ENCODE measurements at regions of chr2 and their contacts with region 1.

Region 1: DNA sequence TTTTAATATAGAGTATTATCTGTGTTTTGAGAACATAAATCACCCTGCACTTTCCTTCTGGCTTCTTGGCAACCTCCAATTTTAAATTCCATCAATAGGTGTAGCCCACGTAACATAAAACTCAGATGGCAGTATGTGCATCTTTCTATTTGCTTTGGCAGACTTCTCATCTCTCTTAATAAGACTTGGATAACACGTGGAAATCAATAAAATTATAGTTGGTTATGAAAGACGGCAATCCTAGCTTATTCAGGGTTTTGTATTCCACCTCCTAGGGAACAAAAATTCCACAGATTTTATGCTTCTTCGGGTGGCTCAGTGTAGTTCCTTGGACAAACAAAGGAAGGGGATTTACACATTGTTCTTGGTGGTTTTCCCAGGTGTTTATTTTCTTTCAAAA is 299.3 kb downstream of the RND3 start:
- DNase-seq: no peak
- H3K4me3 Mint-ChIP-seq: no peak overlapping the region
- H3K27ac Mint-ChIP-seq: peak overlapping the region; percentile 72
- H3K4me1 Mint-ChIP-seq: peaks cover 13% of the 10 kb centered on the region
- H3K27me3 Mint-ChIP-seq: no peaks in the 10 kb centered on the region
- CTCF ChIP-seq: no peak

Region 2: DNA sequence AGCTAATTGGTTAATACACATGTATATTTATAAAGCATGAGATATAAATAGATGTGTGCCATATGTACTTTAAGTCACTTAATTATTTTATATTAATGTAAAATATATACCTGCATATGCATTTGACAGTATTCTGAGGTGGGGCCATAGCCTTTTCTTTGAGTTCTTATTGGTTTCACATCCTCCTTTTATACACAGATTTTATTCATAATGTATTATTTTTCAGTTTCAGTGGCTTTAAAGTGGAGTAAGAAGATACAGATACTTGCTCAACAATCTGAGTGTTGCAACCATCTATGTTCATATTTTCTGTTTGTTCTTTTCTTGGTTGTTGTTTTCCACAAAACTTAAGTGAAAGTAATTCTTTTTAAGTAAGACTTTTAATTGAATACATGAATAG is 137.2 kb before region 1 on chr2:
- CTCF ChIA-PET with region 1: no interaction called
- intact Hi-C with region 1: no loop called
- DNase-seq: no peak
- H3K4me3 Mint-ChIP-seq: no peak overlapping the region
- H3K27ac Mint-ChIP-seq: no peak overlapping the region
- H3K4me1 Mint-ChIP-seq: peaks cover 5% of the 10 kb centered on the region
- H3K27me3 Mint-ChIP-seq: no peaks in the 10 kb centered on the region
- CTCF ChIP-seq: no peak

Region 3: DNA sequence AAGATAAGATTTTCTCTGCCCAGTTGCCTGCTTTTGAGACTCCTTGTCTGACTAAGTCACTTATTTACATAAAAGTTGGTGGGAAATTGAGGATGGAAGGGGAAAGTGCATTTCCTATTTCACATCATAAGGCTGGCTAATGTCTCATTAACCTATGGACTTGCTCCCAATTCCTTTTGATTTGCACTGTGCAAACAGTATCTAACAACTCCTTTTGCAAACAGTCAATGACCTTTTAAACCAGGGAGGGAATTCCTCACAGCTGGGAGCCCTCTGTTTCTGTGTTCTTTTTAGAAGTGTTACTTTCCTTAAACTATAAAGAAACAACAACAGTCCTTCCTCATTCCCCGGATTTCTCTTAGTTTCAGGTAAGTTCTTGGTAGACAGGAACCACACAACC is 26.4 kb after region 1 on chr2:
- CTCF ChIA-PET with region 1: no interaction called
- intact Hi-C with region 1: no loop called
- DNase-seq: peak; percentile 33
- H3K4me3 Mint-ChIP-seq: no peak overlapping the region
- H3K27ac Mint-ChIP-seq: peak overlapping the region; percentile 14
- H3K4me1 Mint-ChIP-seq: peaks cover 19% of the 10 kb centered on the region
- H3K27me3 Mint-ChIP-seq: no peaks in the 10 kb centered on the region
- CTCF ChIP-seq: no peak

Region 4: DNA sequence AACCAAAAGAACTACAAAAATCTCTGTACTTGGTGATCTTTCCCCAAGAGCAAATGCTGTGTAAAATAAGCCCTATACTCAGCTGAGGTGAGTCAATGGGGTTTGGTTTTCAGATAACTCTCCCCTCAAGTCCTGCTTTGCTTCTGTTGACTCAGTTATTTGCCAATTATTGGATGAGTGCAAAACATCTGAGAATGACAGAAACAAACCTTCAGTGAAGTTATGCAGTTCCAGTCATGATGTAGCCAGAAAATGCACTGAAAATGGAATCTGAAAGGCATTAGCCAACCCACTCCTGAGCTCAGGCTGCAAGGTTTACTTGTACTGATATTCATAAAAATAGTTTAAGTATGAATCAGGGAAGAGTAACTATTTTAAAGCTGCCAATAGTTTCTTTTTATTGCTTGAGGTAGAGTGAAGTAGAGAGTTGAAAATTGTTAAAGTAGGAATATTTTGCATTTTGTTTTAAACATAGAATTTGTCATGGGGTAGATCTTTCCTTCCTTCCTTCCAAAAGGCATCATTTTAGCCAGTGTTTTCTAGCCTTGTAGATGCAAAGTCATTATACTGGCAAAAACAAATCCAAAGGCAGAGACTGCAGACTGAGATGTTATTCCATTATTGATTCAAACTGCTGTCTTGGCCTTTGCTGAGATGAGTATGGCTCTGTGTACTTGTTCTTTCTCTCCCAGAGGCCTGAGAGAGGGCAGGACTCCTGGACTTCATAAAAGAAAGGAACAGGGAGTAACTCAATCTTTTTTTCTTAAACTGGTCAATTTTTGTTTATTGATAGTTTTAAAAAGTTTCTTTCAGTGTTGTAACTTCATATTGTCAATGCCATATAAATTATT is 84.0 kb after region 1 on chr2:
- CTCF ChIA-PET with region 1: no interaction called
- intact Hi-C with region 1: no loop called
- DNase-seq: no peak
- H3K4me3 Mint-ChIP-seq: no peak overlapping the region
- H3K27ac Mint-ChIP-seq: no peak overlapping the region
- H3K4me1 Mint-ChIP-seq: no peaks in the 10 kb centered on the region
- H3K27me3 Mint-ChIP-seq: no peaks in the 10 kb centered on the region
- CTCF ChIP-seq: no peak

Region 5: DNA sequence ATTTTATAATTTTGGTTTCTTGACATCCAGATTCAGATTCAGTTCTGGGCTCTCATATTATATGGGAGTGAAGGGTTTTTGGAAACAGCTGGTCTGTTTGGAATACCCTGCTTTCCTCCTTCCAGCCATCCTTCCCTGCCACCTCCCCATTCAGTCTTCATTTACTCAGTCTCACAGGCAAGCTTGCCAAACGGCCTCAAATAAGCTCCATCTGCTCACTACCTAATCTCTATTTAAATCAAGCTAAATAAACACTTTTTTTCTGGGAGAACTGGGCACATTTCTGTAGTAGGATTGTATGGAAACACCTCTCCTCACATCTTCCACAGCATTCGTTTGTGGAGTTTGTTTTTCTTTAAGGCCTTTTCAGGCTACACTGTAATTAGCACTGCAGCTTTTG is 151.8 kb after region 1 on chr2:
- CTCF ChIA-PET with region 1: no interaction called
- intact Hi-C with region 1: loop called (anchors 5 kb)
- DNase-seq: no peak
- H3K4me3 Mint-ChIP-seq: no peak overlapping the region
- H3K27ac Mint-ChIP-seq: no peak overlapping the region
- H3K4me1 Mint-ChIP-seq: no peaks in the 10 kb centered on the region
- H3K27me3 Mint-ChIP-seq: no peaks in the 10 kb centered on the region
- CTCF ChIP-seq: no peak